ENCODE measurements at regions of chr5 and their contacts with region 1.

Region 1: DNA sequence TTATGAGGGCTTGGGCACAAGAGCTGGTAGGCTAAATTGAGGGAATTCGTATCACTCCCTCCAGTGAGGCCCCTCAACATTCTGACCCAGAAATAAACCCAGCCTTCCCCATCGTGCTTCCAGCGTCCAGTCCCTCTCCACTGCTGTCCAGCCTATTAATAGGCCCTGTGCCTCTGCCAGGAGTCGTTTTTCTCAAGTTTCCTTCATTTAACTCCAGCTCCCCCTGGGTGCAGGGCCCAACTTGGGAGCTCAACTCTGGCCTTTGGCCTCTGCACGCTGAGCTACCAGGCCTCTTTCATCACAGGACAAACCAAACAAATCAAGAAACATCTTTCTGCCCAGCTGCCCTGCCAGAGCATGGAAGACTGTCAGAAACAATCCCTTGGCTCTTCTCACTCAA is 10.0 kb downstream of the HBEGF start:
- DNase-seq: no peak
- ATAC-seq: peak in 3 of 4 donors; percentile 14 to 43 (median 16)
- H3K4me3 ChIP-seq: no peak overlapping the region
- H3K27ac ChIP-seq: peak overlapping the region; percentile 94
- H3K4me1 ChIP-seq: peaks cover 63% of the 10 kb centered on the region
- H3K27me3 ChIP-seq: no peaks in the 10 kb centered on the region
- CTCF ChIP-seq: no peak

Region 2: GRCh38 chr5:140284013-140284412 is 52.4 kb before region 1 on chr5:
- intact Hi-C with region 1: no loop called
- DNase-seq: no peak
- ATAC-seq: peak in 2 of 4 donors; percentile 23 to 42
- H3K4me3 ChIP-seq: no peak overlapping the region
- H3K27ac ChIP-seq: peak overlapping the region; percentile 8
- H3K4me1 ChIP-seq: peaks cover 47% of the 10 kb centered on the region
- H3K27me3 ChIP-seq: no peaks in the 10 kb centered on the region
- CTCF ChIP-seq: no peak

Region 3: DNA sequence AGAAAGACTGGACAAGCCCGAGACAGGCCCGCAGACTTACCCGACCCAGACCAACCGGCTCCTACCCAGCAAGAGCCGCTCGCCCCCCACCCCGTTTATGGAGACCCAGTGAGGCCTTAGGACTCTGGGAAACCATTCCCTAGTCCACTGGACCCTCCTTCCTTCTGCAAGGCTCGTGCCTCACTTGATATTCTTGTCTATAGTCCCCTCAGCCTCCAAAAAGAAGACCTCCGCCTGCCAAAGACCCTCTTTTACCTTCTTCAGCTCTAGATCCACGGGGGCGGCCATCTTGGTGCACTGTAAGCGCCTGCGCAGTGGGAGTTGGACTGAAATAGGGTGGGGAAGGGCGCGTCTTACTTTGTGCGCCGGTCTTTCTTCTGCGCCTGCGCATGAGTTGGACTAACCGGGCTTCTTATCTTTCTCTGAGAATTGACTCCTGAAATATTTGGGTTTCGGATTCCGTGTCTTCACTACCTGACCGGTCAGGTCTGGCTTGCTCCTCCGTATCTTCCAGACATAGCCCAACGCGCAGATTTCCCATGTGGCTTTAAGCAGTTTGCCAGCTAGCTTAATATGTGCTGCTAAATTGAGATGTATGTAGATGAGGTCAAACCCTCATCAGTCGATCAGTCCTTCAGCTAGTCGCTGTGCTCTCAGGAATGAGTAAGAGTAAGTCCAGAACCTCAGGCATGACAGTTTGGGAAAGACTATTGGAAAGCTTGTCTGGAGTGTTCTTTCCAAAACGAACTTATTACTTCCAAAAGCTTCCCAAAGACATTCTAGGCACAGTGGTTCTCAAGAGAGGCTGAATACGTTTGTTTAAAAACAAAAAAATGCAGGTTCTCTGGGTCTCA is 33.4 kb before region 1 on chr5 and contains the start of gene PFDN1:
- intact Hi-C with region 1: loop called (anchors 5 kb)
- DNase-seq: peak; percentile 95 to 96
- ATAC-seq: peak; percentile 99
- H3K4me3 ChIP-seq: peak within 1 kb of the TSS; percentile 92
- H3K27ac ChIP-seq: peak within 1 kb of the TSS; percentile 96
- H3K4me1 ChIP-seq: peaks cover 33% of the 10 kb centered on the region
- H3K27me3 ChIP-seq: no peaks in the 10 kb centered on the region
- CTCF ChIP-seq: no peak
- total RNA-seq, gene PFDN1: 35.9 to 55.0 (median 42.3) TPM